IMR-90 (cell line): ENCODE measurements at regions of chr14 and their contacts with region 1.

Region 1: GRCh38 chr14:66624299-66624937 is 116.5 kb downstream of the GPHN start:
- DNase-seq: peak; percentile 69
- ATAC-seq: peak; percentile 97
- H3K4me3 ChIP-seq: no peak overlapping the region
- H3K27ac ChIP-seq: no peak overlapping the region
- H3K4me1 ChIP-seq: no peaks in the 10 kb centered on the region; the same call in 1 of the 2 replicates
- H3K27me3 ChIP-seq: no peaks in the 10 kb centered on the region
- CTCF ChIP-seq: peak; percentile 79
- POLR2A ChIP-seq: no peak
- RAD21 ChIP-seq: peak; percentile 84

Region 2: DNA sequence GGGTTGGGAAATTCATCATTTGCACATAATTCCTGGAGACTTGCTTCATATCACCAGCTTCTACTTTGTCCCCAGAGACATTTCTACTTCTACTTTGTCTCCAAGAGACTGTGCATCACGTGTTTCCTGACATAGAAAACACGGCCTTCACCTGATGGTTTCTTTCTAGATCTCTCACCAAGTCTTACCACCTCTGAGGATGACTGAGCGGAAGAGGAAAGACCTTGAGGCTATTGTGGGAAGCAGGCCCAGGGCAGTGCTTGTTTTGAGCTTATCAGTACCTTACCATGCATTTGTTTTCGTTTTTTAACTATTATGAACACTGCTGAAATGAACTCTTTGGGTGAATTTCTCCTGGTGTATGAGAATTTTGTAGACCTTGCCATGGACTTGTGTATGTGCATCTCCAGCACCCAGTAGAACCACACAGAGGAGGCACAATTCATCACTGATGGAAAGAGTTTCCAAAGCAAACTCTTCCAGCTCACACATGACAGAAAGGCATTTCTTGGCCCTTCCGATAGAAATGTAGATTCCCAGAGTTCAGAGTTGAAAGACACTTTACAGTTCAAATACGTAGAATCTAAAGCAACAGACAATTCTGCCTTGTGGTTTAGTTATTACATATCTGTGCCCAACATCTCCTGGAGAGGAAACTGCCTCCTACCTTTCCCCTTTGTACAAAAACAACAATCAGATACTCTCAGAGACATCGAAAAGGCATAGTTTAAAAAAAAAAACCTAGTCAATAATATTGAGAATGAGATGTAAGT is 777.2 kb before region 1 on chr14:
- CTCF ChIA-PET with region 1: no interaction called
- POLR2A ChIA-PET with region 1: no interaction called
- dilution Hi-C with region 1: no loop called
- in situ Hi-C with region 1: no loop called
- intact Hi-C with region 1: no loop called
- DNase-seq: no peak
- ATAC-seq: no peak
- H3K4me3 ChIP-seq: no peak overlapping the region
- H3K27ac ChIP-seq: no peak overlapping the region
- H3K4me1 ChIP-seq: no peaks in the 10 kb centered on the region
- H3K27me3 ChIP-seq: no peaks in the 10 kb centered on the region
- CTCF ChIP-seq: no peak
- POLR2A ChIP-seq: no peak
- RAD21 ChIP-seq: no peak

Region 3: GRCh38 chr14:66495218-66496098 is 129.0 kb before region 1 on chr14:
- CTCF ChIA-PET with region 1: interaction called, 3 read pairs
- POLR2A ChIA-PET with region 1: no interaction called
- dilution Hi-C with region 1: no loop called
- in situ Hi-C with region 1: no loop called
- intact Hi-C with region 1: loop called (anchors 5 kb)
- DNase-seq: peak; percentile 71
- ATAC-seq: peak; percentile 97
- H3K4me3 ChIP-seq: no peak overlapping the region
- H3K27ac ChIP-seq: no peak overlapping the region
- H3K4me1 ChIP-seq: peaks cover 2% of the 10 kb centered on the region; the same call in 1 of the 2 replicates
- H3K27me3 ChIP-seq: no peaks in the 10 kb centered on the region; the same call in 1 of the 2 replicates
- CTCF ChIP-seq: peak; percentile 77
- POLR2A ChIP-seq: no peak
- RAD21 ChIP-seq: peak; percentile 69

Region 4: DNA sequence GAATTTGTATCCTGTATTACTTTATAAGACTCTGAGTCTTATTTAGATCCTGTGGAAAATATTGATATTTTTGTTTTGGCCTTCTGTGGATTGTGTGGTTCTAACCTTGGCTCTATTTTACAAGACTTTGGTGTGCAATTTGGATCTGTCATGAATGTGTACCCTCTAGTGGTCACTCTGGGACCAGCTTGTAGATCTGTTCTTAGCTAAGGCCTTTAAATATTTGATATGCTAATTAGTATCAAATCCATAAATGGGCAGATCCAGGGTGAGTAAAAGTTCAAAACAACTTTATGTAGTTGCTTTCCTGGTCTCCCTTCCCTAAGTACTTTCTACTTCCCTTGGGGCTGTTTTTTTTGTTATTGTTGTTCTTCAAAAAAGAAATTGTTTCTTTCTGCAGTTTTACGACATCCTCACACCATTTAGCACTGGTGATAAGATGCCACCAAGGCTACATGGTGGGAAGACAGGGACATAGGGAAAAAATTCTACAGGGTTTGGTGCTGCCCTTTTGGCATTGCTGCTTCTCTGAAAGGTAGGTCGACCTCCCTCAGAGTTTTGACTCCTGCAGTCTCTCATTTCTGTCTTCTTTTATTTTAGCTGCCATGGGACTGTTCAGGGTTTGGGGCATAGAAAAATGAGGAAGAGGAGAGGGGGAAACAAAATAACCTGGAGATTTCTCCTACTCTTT is 122.0 kb after region 1 on chr14:
- CTCF ChIA-PET with region 1: interaction called, 6 read pairs
- POLR2A ChIA-PET with region 1: no interaction called
- dilution Hi-C with region 1: no loop called
- in situ Hi-C with region 1: no loop called
- intact Hi-C with region 1: loop called (anchors 1 kb)
- DNase-seq: peak; percentile 58
- ATAC-seq: peak; percentile 63
- H3K4me3 ChIP-seq: no peak overlapping the region
- H3K27ac ChIP-seq: no peak overlapping the region
- H3K4me1 ChIP-seq: no peaks in the 10 kb centered on the region
- H3K27me3 ChIP-seq: no peaks in the 10 kb centered on the region
- CTCF ChIP-seq: peak; percentile 52
- POLR2A ChIP-seq: no peak
- RAD21 ChIP-seq: peak; percentile 40

Region 5: DNA sequence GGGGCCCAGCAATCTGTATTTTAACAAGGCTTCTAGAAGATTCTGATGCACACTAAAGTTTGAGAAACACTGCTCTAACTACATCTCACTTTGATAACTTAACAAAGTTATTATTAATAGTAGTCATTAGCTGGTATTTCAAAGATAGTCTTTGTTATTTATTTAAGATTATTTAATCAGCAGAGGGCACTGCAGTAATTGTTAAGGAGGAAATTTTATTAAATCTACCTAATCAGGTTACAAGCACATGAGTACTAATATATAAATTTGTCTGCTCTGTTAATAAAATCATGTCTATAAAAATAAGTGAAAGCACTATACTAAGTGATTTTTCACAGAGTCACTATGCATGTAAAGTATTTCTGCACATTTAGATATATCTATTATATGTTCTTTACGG is 243.6 kb after region 1 on chr14:
- CTCF ChIA-PET with region 1: no interaction called
- POLR2A ChIA-PET with region 1: no interaction called
- dilution Hi-C with region 1: no loop called
- in situ Hi-C with region 1: no loop called
- intact Hi-C with region 1: loop called (anchors 5 kb)
- DNase-seq: no peak
- ATAC-seq: no peak
- H3K4me3 ChIP-seq: no peak overlapping the region
- H3K27ac ChIP-seq: no peak overlapping the region
- H3K4me1 ChIP-seq: no peaks in the 10 kb centered on the region
- H3K27me3 ChIP-seq: no peaks in the 10 kb centered on the region
- CTCF ChIP-seq: no peak
- POLR2A ChIP-seq: no peak
- RAD21 ChIP-seq: no peak

Region 6: GRCh38 chr14:67111022-67111421 is 486.6 kb after region 1 on chr14:
- CTCF ChIA-PET with region 1: no interaction called
- POLR2A ChIA-PET with region 1: no interaction called
- dilution Hi-C with region 1: no loop called
- in situ Hi-C with region 1: loop called (anchors 10 kb)
- intact Hi-C with region 1: no loop called
- DNase-seq: no peak
- ATAC-seq: no peak
- H3K4me3 ChIP-seq: no peak overlapping the region
- H3K27ac ChIP-seq: no peak overlapping the region
- H3K4me1 ChIP-seq: no peaks in the 10 kb centered on the region
- H3K27me3 ChIP-seq: no peaks in the 10 kb centered on the region
- CTCF ChIP-seq: no peak
- POLR2A ChIP-seq: no peak
- RAD21 ChIP-seq: no peak

Region 7: GRCh38 chr14:67137744-67138371 is 513.4 kb after region 1 on chr14:
- CTCF ChIA-PET with region 1: no interaction called
- POLR2A ChIA-PET with region 1: no interaction called
- dilution Hi-C with region 1: no loop called
- in situ Hi-C with region 1: no loop called
- intact Hi-C with region 1: loop called (anchors 5 kb)
- DNase-seq: peak; percentile 22
- ATAC-seq: no peak
- H3K4me3 ChIP-seq: no peak overlapping the region
- H3K27ac ChIP-seq: no peak overlapping the region
- H3K4me1 ChIP-seq: no peaks in the 10 kb centered on the region
- H3K27me3 ChIP-seq: no peaks in the 10 kb centered on the region
- CTCF ChIP-seq: peak; percentile 57
- POLR2A ChIP-seq: no peak
- RAD21 ChIP-seq: peak; percentile 54

Region 8: GRCh38 chr14:67285876-67286452 is 661.5 kb after region 1 on chr14:
- CTCF ChIA-PET with region 1: no interaction called
- POLR2A ChIA-PET with region 1: no interaction called
- dilution Hi-C with region 1: no loop called
- in situ Hi-C with region 1: loop called (anchors 25 kb)
- intact Hi-C with region 1: loop called (anchors 2 kb)
- DNase-seq: peak; percentile 64
- ATAC-seq: peak; percentile 24; the same call in 1 of the 2 replicates
- H3K4me3 ChIP-seq: no peak overlapping the region
- H3K27ac ChIP-seq: no peak overlapping the region
- H3K4me1 ChIP-seq: no peaks in the 10 kb centered on the region
- H3K27me3 ChIP-seq: no peaks in the 10 kb centered on the region
- CTCF ChIP-seq: peak; percentile 69
- POLR2A ChIP-seq: no peak
- RAD21 ChIP-seq: peak; percentile 65